Activated B cell treated with CpG ODN at 0.5 μM for 24 hours (primary cell): ENCODE measurements at regions of chr2 and their contacts with region 1.

Region 1: DNA sequence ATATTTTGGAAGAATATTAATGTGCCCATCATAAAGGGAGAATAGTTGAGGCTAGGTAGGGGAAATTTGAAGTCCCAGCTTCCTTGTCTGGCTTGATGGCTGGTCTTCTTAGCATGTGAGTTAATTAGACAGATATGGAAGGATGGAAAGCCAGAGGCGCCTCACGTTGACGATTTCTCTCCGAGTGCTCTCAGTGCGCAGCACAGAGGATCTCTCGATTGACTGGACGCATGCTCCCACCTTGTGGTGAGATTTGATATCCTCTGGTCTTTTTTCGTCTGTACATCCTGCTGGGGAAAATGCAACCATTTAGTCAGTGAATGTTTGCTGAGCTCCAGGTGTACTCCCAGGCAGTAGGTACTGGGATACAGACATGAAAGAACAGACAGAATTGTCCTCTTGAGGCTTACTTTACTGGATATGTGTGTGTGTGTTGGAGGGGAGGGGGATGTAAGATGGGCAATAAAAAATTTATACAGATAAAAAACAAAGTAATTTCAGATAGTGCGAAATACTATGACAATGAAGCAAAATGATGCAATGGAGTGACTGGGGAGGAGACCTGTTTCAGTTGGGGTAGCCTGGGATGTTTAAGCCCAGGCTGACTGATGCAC is 66.9 kb upstream of the ZNG1B start:
- DNase-seq: peak; percentile 24
- ATAC-seq: peak; percentile 89
- H3K4me3 Mint-ChIP-seq: no peak overlapping the region
- H3K27ac Mint-ChIP-seq: no peak overlapping the region
- H3K4me1 Mint-ChIP-seq: peaks cover 33% of the 10 kb centered on the region
- H3K27me3 Mint-ChIP-seq: no peaks in the 10 kb centered on the region
- CTCF ChIP-seq: no peak

Region 2: GRCh38 chr2:113080134-113080533 is 290.5 kb before region 1 on chr2:
- CTCF ChIA-PET with region 1: interaction called, 5 read pairs
- POLR2A ChIA-PET with region 1: no interaction called
- intact Hi-C with region 1: loop called (anchors 1 kb)
- DNase-seq: peak; percentile 31
- ATAC-seq: peak; percentile 82
- H3K4me3 Mint-ChIP-seq: no peak overlapping the region
- H3K27ac Mint-ChIP-seq: no peak overlapping the region
- H3K4me1 Mint-ChIP-seq: no peaks in the 10 kb centered on the region
- H3K27me3 Mint-ChIP-seq: peaks cover 24% of the 10 kb centered on the region
- CTCF ChIP-seq: peak; percentile 23

Region 3: DNA sequence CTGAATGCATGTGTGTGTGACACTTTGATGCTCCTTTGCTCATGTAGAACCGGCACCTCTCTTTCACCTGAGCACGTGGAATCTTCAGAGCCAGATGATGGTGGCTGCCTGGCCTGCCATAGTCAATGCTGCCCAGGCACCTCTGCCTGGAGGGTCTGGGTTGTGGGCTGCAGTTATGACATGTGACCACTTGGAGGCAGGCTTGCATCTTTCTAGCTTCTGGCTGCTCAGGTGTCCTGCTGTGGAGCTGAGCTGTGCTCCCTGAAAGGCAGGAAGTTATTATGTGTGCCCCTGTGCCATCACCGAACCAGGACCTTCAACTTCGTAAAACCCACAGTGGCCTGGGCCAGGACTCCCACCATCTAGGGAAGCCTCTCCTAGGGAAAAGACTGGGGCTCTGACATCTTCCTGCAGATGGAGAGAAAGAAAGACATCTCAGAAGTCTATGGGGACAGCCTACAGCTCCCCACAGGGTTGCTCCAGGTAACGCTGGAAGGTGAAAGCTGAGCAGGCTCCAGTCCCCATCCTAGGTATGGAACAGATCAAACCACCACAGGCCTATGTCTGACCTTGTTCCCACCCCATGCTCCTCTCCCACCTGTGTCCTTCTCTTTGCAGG is 166.6 kb before region 1 on chr2:
- CTCF ChIA-PET with region 1: interaction called, 15 read pairs
- POLR2A ChIA-PET with region 1: interaction called, 3 read pairs
- intact Hi-C with region 1: loop called (anchors 1 kb)
- DNase-seq: peak; percentile 54
- ATAC-seq: peak; percentile 78
- H3K4me3 Mint-ChIP-seq: no peak overlapping the region
- H3K27ac Mint-ChIP-seq: peak overlapping the region; percentile 74
- H3K4me1 Mint-ChIP-seq: peaks cover 16% of the 10 kb centered on the region
- H3K27me3 Mint-ChIP-seq: no peaks in the 10 kb centered on the region
- CTCF ChIP-seq: peak; percentile 27

Region 4: DNA sequence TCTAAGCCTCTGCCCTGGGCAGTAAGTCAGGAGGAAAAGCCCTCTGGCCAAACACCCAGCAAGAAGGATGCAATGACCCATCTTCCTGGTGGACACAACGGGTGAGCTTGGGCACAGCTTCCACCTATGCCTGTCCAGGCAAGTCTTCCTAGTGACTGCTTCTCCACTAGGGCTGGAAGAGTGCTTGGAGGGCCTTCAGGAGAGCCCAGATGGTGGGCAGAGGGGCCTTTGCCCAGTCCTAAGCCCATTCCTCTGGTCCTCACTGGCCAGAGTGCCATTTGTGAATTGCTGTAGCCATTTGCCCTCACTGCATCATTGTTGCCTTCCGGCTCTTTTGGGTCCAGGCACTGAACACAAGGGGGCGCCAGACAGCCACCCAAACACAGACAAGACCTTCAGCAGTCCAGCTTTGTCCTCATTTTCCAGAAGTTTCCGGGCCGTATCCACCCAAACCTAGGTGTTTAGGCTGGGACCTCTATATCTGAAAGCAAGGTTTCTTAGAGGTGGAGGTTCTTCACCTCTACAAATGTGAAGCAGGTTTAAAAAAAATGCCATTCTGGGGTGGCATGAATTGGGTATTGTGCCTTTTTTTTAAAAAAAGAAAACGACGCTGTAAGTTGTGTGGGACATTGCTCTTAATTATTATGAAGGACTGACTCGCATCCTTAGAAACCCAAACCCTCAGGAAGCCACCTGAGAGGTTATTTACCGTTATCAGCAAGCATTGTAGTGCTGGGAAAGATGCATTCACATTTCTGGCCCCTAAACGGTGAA is 121.4 kb before region 1 on chr2:
- CTCF ChIA-PET with region 1: interaction called, 29 read pairs
- POLR2A ChIA-PET with region 1: no interaction called
- intact Hi-C with region 1: loop called (anchors 1 kb)
- DNase-seq: peak; percentile 64
- ATAC-seq: peak; percentile 86
- H3K4me3 Mint-ChIP-seq: no peak overlapping the region
- H3K27ac Mint-ChIP-seq: no peak overlapping the region
- H3K4me1 Mint-ChIP-seq: peaks cover 11% of the 10 kb centered on the region
- H3K27me3 Mint-ChIP-seq: peaks cover 2% of the 10 kb centered on the region
- CTCF ChIP-seq: peak; percentile 92

Region 5: DNA sequence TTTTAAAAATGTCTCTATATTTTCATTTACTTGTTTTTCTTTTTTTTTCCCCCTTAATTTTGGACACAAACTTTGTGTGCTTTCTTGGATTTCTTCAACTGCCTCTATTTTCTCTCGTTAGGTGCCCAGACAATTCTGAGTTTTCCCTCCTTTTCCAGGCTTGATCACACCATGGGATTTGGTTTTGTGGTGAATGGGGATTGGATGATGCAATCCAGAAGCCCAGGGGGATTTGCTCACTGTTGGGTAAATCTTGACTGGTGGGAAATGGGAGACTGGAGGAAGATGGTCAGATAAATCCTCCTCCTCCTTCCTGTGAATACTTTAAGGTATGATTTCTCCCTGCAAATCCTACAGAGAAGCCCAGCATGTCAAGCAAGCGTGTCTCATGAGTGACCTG is 72.4 kb before region 1 on chr2:
- CTCF ChIA-PET with region 1: no interaction called
- POLR2A ChIA-PET with region 1: no interaction called
- intact Hi-C with region 1: loop called (anchors 5 kb)
- DNase-seq: no peak
- ATAC-seq: no peak
- H3K4me3 Mint-ChIP-seq: no peak overlapping the region
- H3K27ac Mint-ChIP-seq: no peak overlapping the region
- H3K4me1 Mint-ChIP-seq: no peaks in the 10 kb centered on the region
- H3K27me3 Mint-ChIP-seq: peaks cover 15% of the 10 kb centered on the region
- CTCF ChIP-seq: no peak